ENCODE measurements at regions of chr6 and their contacts with region 1.

Region 1: DNA sequence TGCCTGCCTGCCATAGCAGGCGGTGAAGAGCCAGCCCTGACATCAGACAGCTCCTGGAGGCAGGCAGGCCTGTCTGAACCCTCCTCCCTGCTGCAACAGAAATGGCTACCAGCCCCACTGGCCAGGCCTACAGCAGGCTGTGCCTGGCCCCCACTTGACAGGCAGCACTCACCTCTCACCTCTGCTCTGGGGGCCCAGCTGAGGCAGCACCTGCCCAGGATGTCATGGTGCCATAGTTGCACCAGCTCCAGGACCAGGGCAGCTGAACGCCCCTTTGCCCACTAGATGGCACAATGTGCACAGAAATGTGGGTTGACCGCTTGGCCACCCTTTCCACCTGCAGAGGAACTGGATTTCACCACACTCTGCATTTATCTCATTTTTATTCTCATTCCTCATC is 30.6 kb downstream of the MRPL14 start:
- DNase-seq: peak; percentile 54
- ATAC-seq: peak; percentile 96
- H3K4me3 Mint-ChIP-seq: no peak overlapping the region
- H3K27ac Mint-ChIP-seq: no peak overlapping the region
- H3K4me1 Mint-ChIP-seq: peaks cover 2% of the 10 kb centered on the region
- H3K27me3 Mint-ChIP-seq: no peaks in the 10 kb centered on the region
- CTCF ChIP-seq: no peak

Region 2: DNA sequence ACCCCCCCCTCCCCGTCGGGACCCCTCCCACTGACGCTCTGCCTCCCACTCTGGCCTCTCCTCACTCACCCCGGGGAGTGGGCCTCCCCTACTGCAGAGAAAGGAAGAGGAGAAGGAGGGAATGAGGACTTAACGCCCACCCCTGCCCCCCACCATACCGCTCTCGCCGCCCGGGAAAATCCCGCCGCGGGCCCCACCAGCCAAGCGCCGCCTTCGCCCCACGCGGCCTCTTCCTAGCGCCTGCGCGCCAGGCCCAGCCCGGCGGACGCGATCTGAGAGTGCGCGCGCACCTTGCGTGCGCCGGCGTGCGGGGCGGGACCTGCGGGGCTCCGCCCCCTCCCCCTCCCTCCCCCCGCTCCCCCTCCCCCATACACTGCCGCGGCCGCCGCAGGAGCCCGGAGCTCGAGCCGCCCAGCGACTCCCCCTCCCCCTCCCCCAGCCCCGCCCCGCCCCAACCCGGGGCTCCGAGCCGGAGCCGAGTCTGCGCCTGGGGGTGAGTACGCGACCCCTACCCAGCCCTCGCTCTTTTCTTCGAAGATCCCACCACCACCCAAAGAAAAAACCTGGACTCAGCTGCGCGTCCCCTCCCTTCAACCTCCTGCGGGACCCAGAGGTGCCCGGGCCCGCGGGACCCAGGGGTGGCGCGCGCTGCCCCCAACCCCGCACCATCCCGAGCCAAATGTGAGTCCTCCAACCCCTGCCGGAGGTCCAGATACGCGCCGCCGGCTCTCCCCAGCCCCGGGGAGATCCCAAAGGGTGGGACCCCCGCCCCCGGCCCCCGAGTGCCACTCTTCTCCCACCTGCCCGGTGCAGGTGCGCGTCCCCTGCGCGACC is 30.8 kb after region 1 on chr6 and contains the starts of genes MRPL14 and TMEM63B:
- CTCF ChIA-PET with region 1: interaction called, 3 read pairs
- POLR2A ChIA-PET with region 1: interaction called, 5 read pairs
- intact Hi-C with region 1: loop called (anchors 1 kb)
- DNase-seq: peak; percentile 89
- ATAC-seq: peak; percentile 87
- H3K4me3 Mint-ChIP-seq: peak within 1 kb of the TSS; percentile 93
- H3K27ac Mint-ChIP-seq: peak within 1 kb of the TSS; percentile 95
- H3K4me1 Mint-ChIP-seq: peaks cover 50% of the 10 kb centered on the region
- H3K27me3 Mint-ChIP-seq: no peaks in the 10 kb centered on the region
- CTCF ChIP-seq: no peak
- total RNA-seq, gene MRPL14: 40.5 and 45.5 TPM in 2 replicates
- total RNA-seq, gene TMEM63B: 12.3 and 13.9 TPM in 2 replicates

Region 3: DNA sequence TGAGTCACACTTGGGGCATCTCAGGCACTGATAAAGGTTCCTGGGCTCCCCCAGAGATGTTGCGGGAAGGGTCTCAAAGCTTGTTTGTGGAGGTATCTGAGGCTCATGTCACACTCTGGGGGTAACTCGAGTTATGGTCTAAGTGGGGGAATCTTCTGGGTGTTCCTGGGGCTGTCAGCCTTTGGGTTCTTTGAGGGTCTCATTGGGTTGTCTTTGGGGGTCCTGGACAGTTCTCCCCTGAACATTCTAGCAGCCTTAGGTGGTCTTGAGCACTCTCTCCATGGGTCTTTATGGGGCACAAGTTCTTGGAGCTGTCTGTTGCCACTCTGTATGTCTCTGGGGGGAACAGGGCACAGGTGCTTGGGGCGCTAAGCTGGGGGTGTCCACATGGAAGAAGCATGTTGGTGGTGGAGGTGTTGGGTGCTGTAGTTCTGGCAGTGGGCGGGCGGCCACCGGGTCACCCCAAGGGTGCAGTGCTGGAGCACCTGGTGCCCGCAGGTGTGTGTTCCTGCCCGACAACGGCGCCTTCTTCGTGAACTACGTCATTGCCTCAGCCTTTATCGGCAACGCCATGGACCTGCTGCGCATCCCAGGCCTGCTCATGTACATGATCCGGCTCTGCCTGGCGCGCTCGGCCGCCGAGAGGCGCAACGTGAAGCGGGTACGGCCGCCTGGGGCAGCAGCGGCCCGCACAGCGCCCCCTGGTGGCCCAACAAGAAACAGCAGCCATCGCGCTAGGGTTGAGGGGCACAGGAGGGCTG is 54.9 kb after region 1 on chr6:
- CTCF ChIA-PET with region 1: interaction called, 25 read pairs
- POLR2A ChIA-PET with region 1: interaction called, 3 read pairs
- intact Hi-C with region 1: loop called (anchors 1 kb)
- DNase-seq: peak; percentile 78
- ATAC-seq: peak; percentile 92
- H3K4me3 Mint-ChIP-seq: no peak overlapping the region
- H3K27ac Mint-ChIP-seq: no peak overlapping the region
- H3K4me1 Mint-ChIP-seq: peaks cover 5% of the 10 kb centered on the region
- H3K27me3 Mint-ChIP-seq: no peaks in the 10 kb centered on the region
- CTCF ChIP-seq: peak; percentile 87

Region 4: GRCh38 chr6:44237813-44238433 is 141.3 kb after region 1 on chr6:
- CTCF ChIA-PET with region 1: interaction called, 5 read pairs
- POLR2A ChIA-PET with region 1: interaction called, 4 read pairs
- intact Hi-C with region 1: loop called (anchors 1 kb)
- DNase-seq: peak; percentile 87
- ATAC-seq: peak; percentile 91
- H3K4me3 Mint-ChIP-seq: peak overlapping the region; percentile 95
- H3K27ac Mint-ChIP-seq: peak overlapping the region; percentile 90
- H3K4me1 Mint-ChIP-seq: peaks cover 17% of the 10 kb centered on the region
- H3K27me3 Mint-ChIP-seq: no peaks in the 10 kb centered on the region
- CTCF ChIP-seq: peak; percentile 84

Region 5: DNA sequence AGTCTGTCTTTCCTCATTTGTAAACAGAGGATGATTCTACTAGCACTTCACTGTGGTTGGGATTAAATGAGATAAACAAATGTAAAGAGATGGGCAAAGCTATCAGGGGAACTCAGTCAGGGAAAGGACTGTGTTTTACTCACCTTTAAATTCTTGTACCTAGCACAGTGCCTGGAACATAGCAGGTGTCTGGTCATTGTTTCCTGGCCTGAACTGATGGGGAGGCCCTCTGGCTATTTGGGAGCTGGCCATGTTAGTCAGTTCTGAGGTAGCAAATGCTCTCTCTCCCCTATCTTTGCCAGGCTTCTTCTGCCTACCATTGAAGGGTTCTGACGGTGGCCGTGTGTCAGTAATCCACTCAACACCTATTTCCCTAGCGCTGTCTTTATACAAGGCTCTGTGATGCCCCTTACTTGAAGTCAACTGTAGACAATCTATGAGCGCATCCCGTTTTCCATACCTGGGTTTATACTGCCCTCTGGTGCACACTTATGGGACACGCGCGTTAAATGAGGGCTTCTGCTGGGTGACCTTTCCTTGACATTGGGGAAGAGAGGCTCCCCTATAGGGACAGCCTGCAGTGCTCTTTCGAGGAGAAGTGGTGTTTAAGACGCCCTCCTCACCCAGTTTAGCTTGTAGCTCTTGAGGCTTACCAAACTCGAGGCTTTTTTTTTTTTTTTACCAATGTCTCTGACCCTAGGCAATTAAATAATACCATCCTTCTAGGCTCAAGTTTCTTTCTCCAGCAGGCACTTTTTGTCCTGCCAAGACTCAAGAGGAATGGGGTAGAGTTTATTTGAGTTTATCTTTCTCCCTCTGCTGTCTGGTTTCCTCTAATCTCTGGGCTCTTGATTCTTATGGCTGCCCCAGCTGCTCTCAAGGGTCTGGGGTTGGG is 241.9 kb after region 1 on chr6:
- CTCF ChIA-PET with region 1: interaction called, 18 read pairs
- POLR2A ChIA-PET with region 1: no interaction called
- intact Hi-C with region 1: loop called (anchors 1 kb)
- DNase-seq: peak; percentile 36
- ATAC-seq: peak; percentile 94
- H3K4me3 Mint-ChIP-seq: no peak overlapping the region
- H3K27ac Mint-ChIP-seq: no peak overlapping the region
- H3K4me1 Mint-ChIP-seq: no peaks in the 10 kb centered on the region
- H3K27me3 Mint-ChIP-seq: peaks cover 22% of the 10 kb centered on the region
- CTCF ChIP-seq: peak; percentile 58

Measured in activated B cell treated with CpG ODN at 0.5 μM for 24 hours (primary cell).